Right cardiac atrium (tissue), 5 donors: ENCODE measurements at regions of chr12 and their contacts with region 1.

Region 1: GRCh38 chr12:40921563-40922163 is 229.4 kb downstream of the CNTN1 start:
- DNase-seq: no peak
- ATAC-seq: no peak
- H3K4me3 ChIP-seq: no peak overlapping the region
- H3K27ac ChIP-seq: no peak overlapping the region
- H3K4me1 ChIP-seq: no peaks in the 10 kb centered on the region
- H3K27me3 ChIP-seq: no peaks in the 10 kb centered on the region

Region 2: DNA sequence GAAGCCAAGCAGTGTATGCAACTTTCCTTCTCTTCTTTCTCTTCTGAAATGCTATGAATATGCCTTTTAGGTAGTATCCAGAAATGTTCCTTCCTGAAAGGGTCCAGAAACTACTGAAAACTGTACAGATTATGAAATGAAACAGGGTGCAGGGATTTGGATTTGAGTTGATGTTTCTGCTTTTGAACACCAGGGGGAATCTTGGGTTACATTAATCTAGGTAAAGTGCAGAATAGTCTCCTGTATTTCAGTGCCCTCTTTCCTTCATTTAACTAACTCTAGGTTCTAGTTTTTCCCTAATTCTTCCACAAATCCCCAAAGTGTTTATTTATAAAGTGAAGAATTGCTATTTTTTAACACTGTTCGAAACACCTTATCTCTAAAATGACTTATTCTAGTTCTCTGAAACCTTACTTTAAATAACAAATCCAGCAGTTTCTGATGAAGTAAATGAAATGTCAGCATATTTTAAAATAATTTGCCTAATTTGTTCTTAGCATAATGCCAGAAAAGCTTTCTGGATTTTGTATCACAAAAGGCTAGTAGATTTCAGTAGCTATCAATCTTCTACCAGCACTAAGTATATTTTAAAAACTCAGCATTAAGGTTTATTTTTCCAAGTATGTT is 585.0 kb before region 1 on chr12:
- intact Hi-C with region 1: loop called in 1 of 4 experiments (anchors 10 kb)
- DNase-seq: no peak
- ATAC-seq: peak in 1 of 2 donors; percentile 41
- H3K4me3 ChIP-seq: no peak overlapping the region
- H3K27ac ChIP-seq: no peak overlapping the region
- H3K4me1 ChIP-seq: no peaks in the 10 kb centered on the region
- H3K27me3 ChIP-seq: no peaks in the 10 kb centered on the region

Region 3: GRCh38 chr12:40569626-40570179 is 352.0 kb before region 1 on chr12:
- intact Hi-C with region 1: no loop called
- DNase-seq: no peak
- ATAC-seq: no peak
- H3K4me3 ChIP-seq: no peak overlapping the region
- H3K27ac ChIP-seq: no peak overlapping the region
- H3K4me1 ChIP-seq: no peaks in the 10 kb centered on the region
- H3K27me3 ChIP-seq: no peaks in the 10 kb centered on the region

Region 4: DNA sequence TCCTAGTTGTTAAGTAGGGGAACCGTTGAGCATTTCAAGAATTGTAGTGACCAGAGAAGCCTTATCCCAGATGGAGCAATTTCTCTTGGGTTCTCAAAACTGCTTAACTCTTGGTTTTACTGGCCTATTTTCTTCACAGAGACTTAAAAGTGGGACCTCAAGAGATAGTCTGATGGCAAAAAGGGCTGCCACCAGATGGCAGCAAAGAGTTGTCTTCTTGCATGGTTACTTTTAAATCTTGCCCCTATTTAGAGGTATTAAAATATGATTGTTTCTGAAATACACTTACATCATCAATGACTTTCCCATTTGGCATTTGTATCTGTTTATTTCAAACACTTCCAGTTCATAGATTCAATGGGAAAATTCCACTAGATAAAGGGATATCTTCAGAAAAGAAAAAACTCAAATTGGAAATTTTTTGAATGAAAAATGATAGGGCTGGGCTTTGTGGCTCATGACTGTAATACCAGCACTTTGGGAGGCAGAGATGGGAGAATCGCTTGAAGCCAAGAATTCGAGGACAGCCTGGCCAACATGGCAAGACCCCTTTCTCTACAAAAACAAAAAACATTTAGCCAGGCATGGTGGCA is 299.3 kb before region 1 on chr12:
- intact Hi-C with region 1: loop called (anchors 5 to 10 kb)
- DNase-seq: peak in 2 of 3 donors; percentile 53 to 83
- ATAC-seq: no peak
- H3K4me3 ChIP-seq: no peak overlapping the region
- H3K27ac ChIP-seq: no peak overlapping the region
- H3K4me1 ChIP-seq: no peaks in the 10 kb centered on the region
- H3K27me3 ChIP-seq: no peaks in the 10 kb centered on the region

Region 5: GRCh38 chr12:40959041-40959440 is 37.4 kb after region 1 on chr12:
- intact Hi-C with region 1: no loop called
- DNase-seq: no peak
- ATAC-seq: no peak
- H3K4me3 ChIP-seq: no peak overlapping the region
- H3K27ac ChIP-seq: no peak overlapping the region
- H3K4me1 ChIP-seq: no peaks in the 10 kb centered on the region
- H3K27me3 ChIP-seq: no peaks in the 10 kb centered on the region

Region 6: DNA sequence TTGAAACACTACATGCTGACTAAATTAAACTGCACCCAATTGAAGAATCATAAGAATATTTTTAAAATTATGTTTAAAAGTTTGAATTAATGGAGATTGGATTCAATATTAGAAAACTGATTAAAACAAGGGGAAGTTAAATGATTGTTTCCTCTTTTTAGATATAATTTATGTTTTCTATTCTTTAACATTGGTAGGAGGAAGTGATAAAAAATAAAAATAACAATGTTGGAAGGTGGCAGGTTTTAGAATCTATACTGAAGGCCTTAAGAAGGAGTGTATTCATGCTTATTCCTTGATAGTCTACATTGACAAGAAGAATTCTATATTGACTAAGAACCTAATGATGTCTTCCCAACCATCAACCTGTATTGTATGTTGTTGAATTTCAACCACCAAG is 434.5 kb after region 1 on chr12:
- intact Hi-C with region 1: no loop called
- DNase-seq: no peak
- ATAC-seq: no peak
- H3K4me3 ChIP-seq: no peak overlapping the region
- H3K27ac ChIP-seq: no peak overlapping the region
- H3K4me1 ChIP-seq: no peaks in the 10 kb centered on the region
- H3K27me3 ChIP-seq: no peaks in the 10 kb centered on the region